Right lobe of liver (tissue), 6 donors: ENCODE measurements at regions of chr16 and their contacts with region 1.

Region 1: DNA sequence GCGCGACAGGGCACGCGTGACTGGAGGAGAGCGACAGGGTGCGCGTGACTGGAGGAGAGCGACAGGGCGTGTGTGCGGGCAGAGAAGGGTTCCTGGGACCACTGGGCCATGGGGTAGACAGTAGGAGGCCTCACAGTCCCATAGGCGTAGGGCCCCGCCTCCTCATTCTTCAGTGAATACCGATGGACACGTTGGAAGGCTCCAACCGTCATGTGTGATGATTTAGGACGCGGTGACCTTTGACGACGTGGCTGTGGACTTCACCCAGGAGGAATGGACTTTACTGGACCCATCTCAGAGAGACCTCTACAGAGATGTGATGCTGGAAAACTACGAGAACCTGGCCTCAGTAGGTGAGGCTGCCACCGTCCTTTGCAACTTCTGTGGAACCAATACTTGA is 5.4 kb downstream of the ZNF778 start:
- DNase-seq: no peak
- ATAC-seq: no peak
- H3K4me3 ChIP-seq: no peak overlapping the region
- H3K27ac ChIP-seq: no peak overlapping the region
- H3K4me1 ChIP-seq: peaks cover 0 to 10% (median 0%) of the 10 kb centered on the region in 4 donors
- H3K27me3 ChIP-seq: no peaks in the 10 kb centered on the region
- CTCF ChIP-seq: no peak
- POLR2A ChIP-seq: no peak

Region 2: GRCh38 chr16:88941913-88942909 is 280.7 kb before region 1 on chr16:
- intact Hi-C with region 1: loop called in 1 of 2 experiments (anchors 10 kb)
- DNase-seq: peak in 1 of 3 donors; percentile 51
- ATAC-seq: peak; percentile 29 to 66 (median 62)
- H3K4me3 ChIP-seq: peak overlapping the region in 1 of 3 donors; percentile 42
- H3K27ac ChIP-seq: no peak overlapping the region
- H3K4me1 ChIP-seq: no peaks in the 10 kb centered on the region
- H3K27me3 ChIP-seq: peaks cover 0 to 12% of the 10 kb centered on the region in 2 donors
- CTCF ChIP-seq: peak; percentile 45 to 80 (median 52)
- POLR2A ChIP-seq: no peak